Naive thymus-derived CD4-positive, alpha-beta T cell (primary cell): ENCODE measurements at regions of chr1 and their contacts with region 1.

Region 1: DNA sequence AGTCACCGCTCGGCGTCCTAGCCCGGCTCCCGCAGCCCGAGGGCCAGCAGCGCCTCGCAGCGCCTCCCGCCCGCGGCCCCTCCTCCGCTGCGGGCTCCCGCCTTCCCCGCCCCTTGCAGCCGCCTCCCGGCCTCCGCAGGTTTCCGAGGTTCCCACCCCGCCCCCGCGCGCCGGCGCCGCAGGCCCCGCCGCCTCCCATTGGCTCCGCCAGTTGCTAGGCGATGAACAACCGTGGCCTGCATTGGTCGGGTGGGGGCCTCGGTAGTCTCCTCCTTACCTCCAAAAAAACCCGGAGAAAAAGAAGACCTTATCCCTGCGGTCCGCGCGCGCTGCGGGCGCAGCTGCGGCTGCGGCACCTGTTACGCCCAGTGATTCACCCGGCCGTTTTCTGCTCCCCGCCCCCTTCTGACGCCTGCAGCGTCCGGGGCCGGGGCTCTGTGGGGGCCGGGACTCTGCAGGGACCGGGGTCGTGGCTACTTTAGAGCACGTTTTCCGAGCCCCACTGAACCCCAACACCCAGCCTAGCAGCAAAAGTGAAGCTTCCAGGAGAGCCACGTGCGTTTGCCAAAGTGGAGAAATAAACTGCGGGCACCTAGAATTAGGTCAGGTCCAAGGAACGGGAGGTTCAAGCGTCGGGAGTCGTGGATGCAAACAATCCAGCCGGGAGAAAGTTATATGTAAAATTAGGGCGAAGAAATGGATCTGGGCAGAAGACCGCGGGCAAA is at the start of gene SSX2IP:
- DNase-seq: peak; percentile 97 to 100 (median 99)
- ATAC-seq: peak; percentile 94
- H3K4me3 ChIP-seq: peak within 1 kb of the TSS; percentile 85
- H3K4me3 Mint-ChIP-seq: peak within 1 kb of the TSS; percentile 85 to 99 (median 92)
- H3K27ac ChIP-seq: peak within 1 kb of the TSS; percentile 82
- H3K27ac Mint-ChIP-seq: peak within 1 kb of the TSS; percentile 92 to 98 (median 96)
- H3K4me1 ChIP-seq: peaks cover 3 to 24% of the 10 kb centered on the region in 2 donors
- H3K4me1 Mint-ChIP-seq: peaks cover 29 to 76% (median 60%) of the 10 kb centered on the region in 7 donors
- H3K27me3 ChIP-seq: no peaks in the 10 kb centered on the region
- H3K27me3 Mint-ChIP-seq: no peaks in the 10 kb centered on the region
- total RNA-seq, gene SSX2IP: 7.5 to 13.4 (median 8.1) TPM

Region 2: GRCh38 chr1:82704393-82704792 is 1986.2 kb before region 1 on chr1:
- CTCF ChIA-PET with region 1: no interaction called
- POLR2A ChIA-PET with region 1: no interaction called
- intact Hi-C with region 1: no loop called
- DNase-seq: no peak
- ATAC-seq: no peak
- H3K4me3 ChIP-seq: no peak overlapping the region
- H3K4me3 Mint-ChIP-seq: no peak overlapping the region
- H3K27ac ChIP-seq: no peak overlapping the region
- H3K27ac Mint-ChIP-seq: no peak overlapping the region
- H3K4me1 ChIP-seq: no peaks in the 10 kb centered on the region
- H3K4me1 Mint-ChIP-seq: no peaks in the 10 kb centered on the region
- H3K27me3 ChIP-seq: no peaks in the 10 kb centered on the region
- H3K27me3 Mint-ChIP-seq: no peaks in the 10 kb centered on the region

Region 3: DNA sequence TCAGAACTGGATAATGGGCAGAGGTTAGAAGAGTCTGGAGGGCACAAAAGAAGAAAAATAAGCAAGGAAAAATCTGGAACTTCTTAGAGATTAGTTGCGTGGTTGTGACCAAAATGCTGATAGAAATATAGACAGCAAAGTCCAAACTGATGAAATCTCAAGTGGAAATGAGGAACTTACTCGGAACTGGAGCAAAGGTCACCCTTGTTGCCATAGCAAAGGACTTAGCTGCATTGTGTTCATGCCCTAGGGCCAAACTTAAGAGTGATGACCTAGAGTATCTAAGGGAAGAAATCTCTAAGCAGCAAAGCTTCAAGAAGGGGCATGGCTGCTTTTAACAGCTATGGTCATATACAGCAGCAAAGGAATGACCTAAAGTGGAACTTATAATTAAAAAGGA is 871.6 kb before region 1 on chr1:
- CTCF ChIA-PET with region 1: no interaction called
- POLR2A ChIA-PET with region 1: no interaction called
- intact Hi-C with region 1: no loop called
- DNase-seq: no peak
- ATAC-seq: peak; percentile 86
- H3K4me3 ChIP-seq: no peak overlapping the region
- H3K4me3 Mint-ChIP-seq: no peak overlapping the region
- H3K27ac ChIP-seq: no peak overlapping the region
- H3K27ac Mint-ChIP-seq: no peak overlapping the region
- H3K4me1 ChIP-seq: no peaks in the 10 kb centered on the region
- H3K4me1 Mint-ChIP-seq: no peaks in the 10 kb centered on the region
- H3K27me3 ChIP-seq: no peaks in the 10 kb centered on the region
- H3K27me3 Mint-ChIP-seq: no peaks in the 10 kb centered on the region

Region 4: GRCh38 chr1:84090447-84091245 is 599.9 kb before region 1 on chr1:
- CTCF ChIA-PET with region 1: no interaction called
- POLR2A ChIA-PET with region 1: no interaction called
- intact Hi-C with region 1: loop called in 1 of 2 experiments (anchors 5 kb)
- DNase-seq: peak in 7 of 9 donors; percentile 26 to 58 (median 43)
- ATAC-seq: peak; percentile 70
- H3K4me3 ChIP-seq: peak overlapping the region; percentile 51
- H3K4me3 Mint-ChIP-seq: peak overlapping the region; percentile 65 to 89 (median 79)
- H3K27ac ChIP-seq: peak overlapping the region; percentile 67
- H3K27ac Mint-ChIP-seq: peak overlapping the region; percentile 10 to 97 (median 83)
- H3K4me1 ChIP-seq: peaks cover 7 to 14% of the 10 kb centered on the region in 2 donors
- H3K4me1 Mint-ChIP-seq: peaks cover 6 to 29% (median 23%) of the 10 kb centered on the region in 7 donors
- H3K27me3 ChIP-seq: no peaks in the 10 kb centered on the region
- H3K27me3 Mint-ChIP-seq: peaks cover 0 to 14% (median 0%) of the 10 kb centered on the region in 5 donors

Region 5: GRCh38 chr1:84442256-84442655 is 248.3 kb before region 1 on chr1:
- CTCF ChIA-PET with region 1: interaction called, 4 read pairs
- POLR2A ChIA-PET with region 1: interaction called, 4 read pairs
- intact Hi-C with region 1: loop called (anchors 2 kb)
- DNase-seq: peak in 7 of 9 donors; percentile 51 to 77 (median 66)
- ATAC-seq: peak; percentile 99
- H3K4me3 ChIP-seq: no peak overlapping the region
- H3K4me3 Mint-ChIP-seq: peak overlapping the region; percentile 14 to 66 (median 41)
- H3K27ac ChIP-seq: no peak overlapping the region
- H3K27ac Mint-ChIP-seq: peak overlapping the region in 5 of 9 donors; percentile 35 to 81 (median 72)
- H3K4me1 ChIP-seq: peaks cover 10 to 21% of the 10 kb centered on the region in 2 donors
- H3K4me1 Mint-ChIP-seq: peaks cover 5 to 24% (median 16%) of the 10 kb centered on the region in 7 donors
- H3K27me3 ChIP-seq: no peaks in the 10 kb centered on the region
- H3K27me3 Mint-ChIP-seq: peaks cover 0 to 16% (median 11%) of the 10 kb centered on the region in 5 donors

Region 6: DNA sequence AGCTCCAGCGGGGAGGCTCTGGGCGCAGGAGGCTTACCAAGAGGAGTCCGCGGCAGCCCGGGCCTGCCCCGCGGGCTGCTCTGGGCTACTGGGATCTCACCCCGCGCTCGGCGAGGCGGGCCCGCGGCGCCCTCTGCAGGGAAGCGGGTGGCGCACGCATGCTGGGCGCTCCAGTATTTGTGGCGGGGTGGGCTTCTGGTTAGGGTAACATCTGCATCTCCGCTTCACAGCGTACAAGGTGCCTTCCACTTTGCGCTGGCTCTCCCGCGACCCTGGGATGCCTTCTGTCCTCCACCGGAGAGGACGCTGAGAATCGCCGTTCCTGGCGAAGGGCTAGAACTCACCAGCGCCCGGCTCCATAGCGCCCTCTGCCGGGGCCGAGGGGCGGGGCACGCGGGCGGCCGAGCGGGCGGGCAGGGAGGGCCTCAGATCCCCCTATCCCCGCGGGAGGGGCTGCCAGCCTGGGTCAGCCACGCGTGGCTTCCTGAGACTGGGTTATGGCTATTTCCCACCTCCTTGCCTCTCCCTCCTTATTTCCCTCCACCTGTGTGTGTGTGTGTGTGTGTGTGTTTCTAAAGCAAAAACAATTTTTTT is 69.7 kb before region 1 on chr1:
- CTCF ChIA-PET with region 1: no interaction called
- POLR2A ChIA-PET with region 1: no interaction called
- intact Hi-C with region 1: loop called (anchors 1 kb)
- DNase-seq: peak; percentile 60 to 95 (median 84)
- ATAC-seq: peak; percentile 96
- H3K4me3 ChIP-seq: peak overlapping the region; percentile 85
- H3K4me3 Mint-ChIP-seq: peak overlapping the region; percentile 85 to 97 (median 92)
- H3K27ac ChIP-seq: peak overlapping the region; percentile 68
- H3K27ac Mint-ChIP-seq: peak overlapping the region in 6 of 9 donors; percentile 53 to 89 (median 82)
- H3K4me1 ChIP-seq: peaks cover 0 to 3% of the 10 kb centered on the region in 2 donors
- H3K4me1 Mint-ChIP-seq: peaks cover 0 to 18% (median 5%) of the 10 kb centered on the region in 7 donors
- H3K27me3 ChIP-seq: no peaks in the 10 kb centered on the region
- H3K27me3 Mint-ChIP-seq: peaks cover 0 to 7% (median 0%) of the 10 kb centered on the region in 5 donors

Region 7: DNA sequence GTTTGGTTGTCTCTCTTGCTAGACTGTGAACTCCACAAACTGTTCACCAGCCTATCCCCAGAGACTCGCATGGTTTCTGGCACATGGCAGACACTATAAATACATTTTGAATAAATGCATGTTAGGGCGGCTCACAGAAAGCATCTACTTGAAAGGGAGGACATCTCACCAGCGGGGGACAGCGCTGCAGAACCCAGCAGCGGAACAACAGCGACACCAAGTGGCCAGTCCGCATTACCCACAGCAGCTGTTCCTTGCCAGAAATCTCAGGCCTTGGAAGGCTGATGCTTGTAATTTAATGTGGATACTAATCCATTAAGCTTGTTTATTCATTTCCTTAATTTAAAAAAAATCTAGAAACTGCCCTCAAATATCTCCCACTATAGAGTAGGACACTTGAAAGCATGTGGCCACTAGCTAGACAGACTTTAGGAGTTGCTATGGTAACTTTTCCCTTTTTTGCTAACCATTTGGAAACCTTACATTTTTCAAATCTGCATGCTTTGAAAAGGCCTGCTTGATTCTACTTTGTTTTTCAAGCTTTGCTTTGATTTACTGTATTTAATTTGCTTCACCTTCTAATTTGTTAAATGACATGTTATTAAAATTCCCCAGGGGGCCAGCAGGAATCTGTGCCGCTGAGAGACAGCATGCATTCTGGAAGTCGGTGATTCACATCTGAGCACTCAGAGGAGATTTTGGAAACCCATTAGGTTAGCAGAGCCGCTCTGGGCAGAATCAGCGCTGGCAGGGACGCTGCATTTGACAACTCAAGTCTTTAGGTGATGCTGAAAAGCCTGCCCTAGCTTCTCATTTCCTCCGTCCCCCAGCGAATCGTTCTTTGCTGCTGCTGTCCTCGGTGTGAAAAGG is 63.2 kb after region 1 on chr1:
- CTCF ChIA-PET with region 1: no interaction called
- POLR2A ChIA-PET with region 1: no interaction called
- intact Hi-C with region 1: loop called in 1 of 2 experiments (anchors 1 kb)
- DNase-seq: peak; percentile 47 to 77 (median 67)
- ATAC-seq: peak; percentile 93
- H3K4me3 ChIP-seq: no peak overlapping the region
- H3K4me3 Mint-ChIP-seq: no peak overlapping the region
- H3K27ac ChIP-seq: no peak overlapping the region
- H3K27ac Mint-ChIP-seq: peak overlapping the region in 1 of 9 donors; percentile 29
- H3K4me1 ChIP-seq: no peaks in the 10 kb centered on the region
- H3K4me1 Mint-ChIP-seq: peaks cover 0 to 7% (median 3%) of the 10 kb centered on the region in 7 donors
- H3K27me3 ChIP-seq: no peaks in the 10 kb centered on the region
- H3K27me3 Mint-ChIP-seq: peaks cover 9 to 26% (median 18%) of the 10 kb centered on the region in 5 donors

Region 8: GRCh38 chr1:84944767-84945486 is 254.4 kb after region 1 on chr1:
- CTCF ChIA-PET with region 1: no interaction called
- POLR2A ChIA-PET with region 1: interaction called, 3 read pairs
- intact Hi-C with region 1: loop called in 1 of 2 experiments (anchors 1 kb)
- DNase-seq: peak; percentile 20 to 94 (median 90)
- ATAC-seq: peak; percentile 98
- H3K4me3 ChIP-seq: peak overlapping the region; percentile 63
- H3K4me3 Mint-ChIP-seq: peak overlapping the region; percentile 72 to 93 (median 86)
- H3K27ac ChIP-seq: peak overlapping the region; percentile 89
- H3K27ac Mint-ChIP-seq: peak overlapping the region; percentile 87 to 98 (median 96)
- H3K4me1 ChIP-seq: peaks cover 5 to 9% of the 10 kb centered on the region in 2 donors
- H3K4me1 Mint-ChIP-seq: peaks cover 7 to 25% (median 12%) of the 10 kb centered on the region in 7 donors
- H3K27me3 ChIP-seq: no peaks in the 10 kb centered on the region
- H3K27me3 Mint-ChIP-seq: peaks cover 0 to 5% (median 0%) of the 10 kb centered on the region in 5 donors

Region 9: DNA sequence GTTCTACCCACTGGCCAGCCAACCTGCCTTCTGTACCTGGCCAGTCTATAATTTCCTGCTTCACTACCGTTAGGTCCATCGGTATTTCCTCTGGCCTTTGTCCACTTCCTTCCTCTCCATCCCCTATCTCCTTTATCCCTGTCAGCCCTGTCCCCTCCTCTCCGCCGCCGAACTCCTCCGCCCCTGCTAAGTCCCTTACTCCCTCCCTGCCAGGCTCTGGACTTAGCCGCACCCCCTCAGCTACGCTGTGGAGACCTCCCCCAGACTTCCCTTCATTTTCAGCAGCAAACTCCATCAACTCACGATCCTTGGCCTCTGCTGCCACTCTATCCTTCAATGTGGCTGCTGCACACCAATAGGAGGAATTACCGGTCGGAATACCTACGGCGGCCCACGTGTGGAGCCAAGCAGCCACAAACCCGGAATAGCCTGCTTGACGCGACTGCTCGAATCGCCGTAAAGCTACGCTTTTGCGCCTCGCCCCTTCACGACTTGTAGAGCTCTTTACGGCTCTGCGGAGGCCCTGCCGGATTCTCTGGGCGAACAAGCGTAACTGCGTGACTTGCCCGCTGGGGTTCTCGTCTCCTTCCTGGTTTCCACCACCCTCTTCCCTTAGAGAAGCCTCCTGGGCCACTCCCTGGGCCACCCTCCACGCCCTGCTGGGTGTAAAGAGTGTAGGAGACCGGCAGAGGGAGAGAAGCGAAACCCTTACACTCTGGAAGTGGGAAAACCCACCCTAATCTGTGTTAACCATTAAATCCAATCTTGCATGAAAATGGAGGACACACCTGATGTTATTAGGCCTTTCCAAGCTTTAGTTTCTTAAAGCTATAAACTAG is 1017.6 kb after region 1 on chr1 and contains the start of gene ZNHIT6:
- CTCF ChIA-PET with region 1: no interaction called
- POLR2A ChIA-PET with region 1: no interaction called
- intact Hi-C with region 1: loop called in 1 of 2 experiments (anchors 2 kb)
- DNase-seq: peak; percentile 62 to 94 (median 89)
- ATAC-seq: peak; percentile 99
- H3K4me3 ChIP-seq: peak within 1 kb of the TSS; percentile 90
- H3K4me3 Mint-ChIP-seq: no peak within 1 kb of the TSS
- H3K27ac ChIP-seq: peak within 1 kb of the TSS; percentile 77
- H3K27ac Mint-ChIP-seq: no peak within 1 kb of the TSS
- H3K4me1 ChIP-seq: peaks cover 14 to 21% of the 10 kb centered on the region in 2 donors
- H3K4me1 Mint-ChIP-seq: peaks cover 11 to 33% (median 18%) of the 10 kb centered on the region in 7 donors
- H3K27me3 ChIP-seq: no peaks in the 10 kb centered on the region
- H3K27me3 Mint-ChIP-seq: no peaks in the 10 kb centered on the region
- total RNA-seq, gene ZNHIT6: 13.8 to 22.2 (median 20.2) TPM